Activated T-helper 1 cell treated with anti-CD3 and anti-CD28 coated beads, Interleukin-12 subunit alpha, Interleukin-12 subunit beta, Interleukin-2, Interleukin-4 antibody, amounts not matched to agents 30 ng/mL and 10 ng/mL and 1 ng/mL, durations not matched to agents 14 hours and 24 hours and 36 hours (primary cell): ENCODE measurements at regions of chr14 and their contacts with region 1.

Region 1: GRCh38 chr14:71320107-71320733 is 413.0 kb downstream of the PCNX1 start:
- DNase-seq: peak; percentile 98
- H3K4me3 Mint-ChIP-seq: peak within 1 kb of the TSS; percentile 94
- H3K27ac Mint-ChIP-seq: peak within 1 kb of the TSS; percentile 97
- H3K4me1 Mint-ChIP-seq: peaks cover 54% of the 10 kb centered on the region
- H3K27me3 Mint-ChIP-seq: peaks cover 2% of the 10 kb centered on the region

Region 2: DNA sequence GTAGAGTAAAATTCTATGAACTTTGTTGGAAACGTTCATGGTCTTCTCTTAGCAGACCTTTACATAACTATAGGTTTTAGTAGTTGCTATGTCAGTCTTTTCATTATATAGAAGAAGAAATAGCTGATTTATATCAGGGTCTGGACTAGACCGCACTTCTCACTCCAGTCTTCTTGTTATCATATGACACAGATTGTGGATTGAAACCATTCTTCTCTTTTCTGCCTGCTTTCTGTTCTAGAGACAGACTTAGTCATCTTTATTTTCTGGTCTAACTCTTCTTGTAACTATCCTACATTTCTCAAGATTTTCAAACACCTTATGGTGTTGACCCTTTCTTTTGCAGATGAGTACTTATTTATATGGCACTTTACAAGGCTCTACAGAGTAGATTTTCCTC is 357.3 kb before region 1 on chr14:
- intact Hi-C with region 1: no loop called
- DNase-seq: no peak
- H3K4me3 Mint-ChIP-seq: no peak overlapping the region
- H3K27ac Mint-ChIP-seq: no peak overlapping the region
- H3K4me1 Mint-ChIP-seq: peaks cover 15% of the 10 kb centered on the region
- H3K27me3 Mint-ChIP-seq: no peaks in the 10 kb centered on the region

Region 3: DNA sequence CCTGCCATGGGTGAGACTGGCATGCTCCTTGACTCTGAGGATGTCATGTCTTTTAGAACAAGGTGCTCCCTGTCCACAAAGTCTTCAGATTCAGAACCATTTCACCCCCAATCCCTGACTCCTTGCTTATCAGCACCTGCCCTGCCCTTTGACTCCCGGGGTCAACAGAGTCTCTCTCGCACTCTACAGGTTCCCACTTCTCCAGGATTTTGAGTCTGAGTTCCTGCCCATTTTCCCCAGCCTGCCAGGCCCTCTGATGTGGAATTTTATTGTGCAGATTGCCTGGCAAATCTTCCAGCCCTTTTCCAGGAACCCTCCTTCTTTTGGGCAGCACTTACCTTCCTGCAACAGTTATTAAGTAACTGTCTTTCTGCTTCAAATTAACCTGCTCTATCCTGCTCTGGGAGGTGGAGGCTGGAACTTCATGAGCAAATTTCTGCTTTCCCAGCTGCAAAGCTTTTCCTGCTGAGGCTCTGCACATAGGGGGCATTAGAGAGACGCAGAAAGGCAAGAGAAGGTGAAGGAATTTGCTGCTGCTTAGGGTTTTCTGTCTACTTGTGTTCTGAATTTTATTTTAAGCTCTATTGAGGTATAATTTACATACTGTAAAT is 153.9 kb before region 1 on chr14:
- intact Hi-C with region 1: loop called (anchors 1 kb)
- DNase-seq: no peak
- H3K4me3 Mint-ChIP-seq: no peak overlapping the region
- H3K27ac Mint-ChIP-seq: no peak overlapping the region
- H3K4me1 Mint-ChIP-seq: peaks cover 20% of the 10 kb centered on the region
- H3K27me3 Mint-ChIP-seq: peaks cover 10% of the 10 kb centered on the region

Region 4: DNA sequence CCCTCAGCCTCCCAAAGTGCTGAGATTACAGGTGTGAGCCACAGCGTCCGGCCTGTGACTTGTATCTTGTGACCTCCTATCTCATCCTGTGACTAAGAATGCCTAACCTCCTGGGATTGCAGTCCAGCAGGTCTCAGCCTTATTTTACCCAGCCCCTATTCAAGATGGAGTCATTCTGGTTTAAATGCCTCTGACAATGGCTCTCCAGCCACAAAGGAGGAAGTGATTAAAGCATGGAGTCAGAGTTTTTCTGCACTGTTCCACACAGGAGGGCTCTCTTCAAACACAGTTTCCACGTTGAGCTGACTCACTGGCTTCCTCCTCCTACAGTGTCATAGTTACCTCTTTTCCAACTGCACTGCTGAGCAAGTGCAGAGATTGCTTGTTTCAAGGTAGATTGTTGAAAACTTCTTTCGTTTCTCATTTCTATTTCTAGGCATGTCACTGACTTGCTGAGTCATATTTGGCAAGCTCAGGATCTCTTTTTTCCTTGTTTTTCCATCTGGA is 29.2 kb before region 1 on chr14:
- intact Hi-C with region 1: loop called (anchors 1 kb)
- DNase-seq: no peak
- H3K4me3 Mint-ChIP-seq: peak overlapping the region; percentile 6
- H3K27ac Mint-ChIP-seq: peak overlapping the region; percentile 81
- H3K4me1 Mint-ChIP-seq: peaks cover 31% of the 10 kb centered on the region
- H3K27me3 Mint-ChIP-seq: peaks cover 7% of the 10 kb centered on the region

Region 5: GRCh38 chr14:71395151-71395604 is 75.0 kb after region 1 on chr14:
- intact Hi-C with region 1: no loop called
- DNase-seq: no peak
- H3K4me3 Mint-ChIP-seq: no peak overlapping the region
- H3K27ac Mint-ChIP-seq: peak overlapping the region; percentile 47
- H3K4me1 Mint-ChIP-seq: peaks cover 52% of the 10 kb centered on the region
- H3K27me3 Mint-ChIP-seq: no peaks in the 10 kb centered on the region

Region 6: DNA sequence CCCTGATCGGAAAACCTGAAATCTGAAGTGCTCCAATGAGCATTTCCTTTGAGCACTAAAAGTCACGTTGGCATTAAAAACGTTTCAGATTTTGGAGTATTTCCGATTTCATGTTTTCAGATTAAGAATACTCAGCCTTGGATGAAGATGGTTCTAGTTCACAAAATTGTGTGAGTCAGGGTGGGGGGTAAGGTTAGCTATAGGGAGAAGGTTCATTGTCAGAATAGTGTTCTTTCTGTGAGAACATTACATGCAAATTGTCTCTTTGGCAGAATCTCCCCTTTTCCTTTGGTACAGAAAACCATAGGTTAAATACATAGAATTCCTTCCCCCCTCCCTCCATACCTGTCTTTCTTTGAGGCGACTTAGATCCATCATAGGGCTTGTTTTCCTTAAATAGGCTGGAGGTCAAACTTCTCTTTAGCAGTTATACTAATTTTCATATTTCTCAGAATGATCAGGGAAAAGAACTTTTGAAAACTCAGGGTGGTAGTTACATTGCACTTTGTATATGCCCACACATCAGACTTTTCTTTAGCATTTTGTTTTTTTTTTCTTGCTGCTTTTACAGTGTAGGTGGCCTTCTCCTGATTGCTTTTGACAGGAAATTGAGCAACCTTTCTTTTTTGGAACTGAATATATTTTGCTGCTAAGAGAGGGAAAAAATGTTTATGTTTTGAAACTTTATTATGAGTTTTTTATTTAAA is 90.5 kb after region 1 on chr14:
- intact Hi-C with region 1: loop called (anchors 2 kb)
- DNase-seq: no peak
- H3K4me3 Mint-ChIP-seq: no peak overlapping the region
- H3K27ac Mint-ChIP-seq: peak overlapping the region; percentile 84
- H3K4me1 Mint-ChIP-seq: peaks cover 62% of the 10 kb centered on the region
- H3K27me3 Mint-ChIP-seq: no peaks in the 10 kb centered on the region

Region 7: DNA sequence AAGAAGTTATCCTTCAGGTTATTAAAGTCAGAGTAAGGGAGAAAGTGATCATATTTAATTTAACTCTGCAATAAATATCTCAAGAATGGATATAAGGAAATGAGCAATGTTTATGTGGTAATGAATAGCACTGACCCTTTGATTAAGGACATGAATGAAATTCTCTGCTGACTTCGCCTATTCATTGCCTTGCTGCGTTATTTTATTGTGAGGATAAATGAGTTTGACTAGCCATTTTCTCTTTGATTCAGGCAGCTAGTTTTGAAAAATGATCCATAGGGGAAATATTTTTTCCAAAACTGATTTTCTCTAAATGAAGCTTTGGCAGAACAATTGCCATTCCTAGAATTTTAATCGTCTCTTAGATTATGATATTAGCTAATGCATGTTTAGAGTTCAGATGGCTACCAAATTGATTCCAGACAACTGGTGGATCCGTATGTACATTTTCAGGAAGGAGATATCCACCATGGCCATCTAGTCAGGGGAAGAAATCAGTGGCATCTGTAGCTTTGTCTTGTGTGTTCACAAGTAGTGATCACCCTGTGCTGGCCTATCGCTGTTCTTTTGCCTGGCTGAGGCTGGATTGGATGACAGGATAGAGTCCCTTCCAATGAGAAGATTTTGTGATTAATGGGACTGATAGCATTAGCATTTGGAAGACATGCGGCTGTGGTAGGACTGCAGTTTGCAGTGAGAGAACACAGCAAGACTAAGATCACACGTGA is 309.7 kb after region 1 on chr14:
- intact Hi-C with region 1: no loop called
- DNase-seq: no peak
- H3K4me3 Mint-ChIP-seq: no peak overlapping the region
- H3K27ac Mint-ChIP-seq: no peak overlapping the region
- H3K4me1 Mint-ChIP-seq: no peaks in the 10 kb centered on the region
- H3K27me3 Mint-ChIP-seq: no peaks in the 10 kb centered on the region

Region 8: DNA sequence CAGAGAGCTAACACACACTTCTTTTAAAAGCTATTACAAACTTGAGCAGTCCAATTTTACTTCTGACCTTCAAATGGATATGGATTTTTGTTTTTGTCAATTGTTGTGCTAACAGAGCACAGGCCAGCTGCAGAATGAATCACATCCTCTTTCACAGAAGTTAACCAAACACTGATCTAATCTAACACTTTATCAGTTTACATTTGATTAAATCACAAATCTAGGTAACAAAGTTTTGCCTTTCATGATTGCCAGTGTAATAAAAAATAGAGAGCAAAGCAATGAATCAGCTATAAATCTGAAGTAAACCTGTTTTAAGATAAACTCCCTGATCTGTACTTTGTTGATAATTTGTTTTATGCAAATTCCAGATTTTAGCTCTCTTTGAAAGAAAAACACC is 338.9 kb after region 1 on chr14:
- intact Hi-C with region 1: loop called (anchors 2 kb)
- DNase-seq: no peak
- H3K4me3 Mint-ChIP-seq: no peak overlapping the region
- H3K27ac Mint-ChIP-seq: peak overlapping the region; percentile 22
- H3K4me1 Mint-ChIP-seq: peaks cover 33% of the 10 kb centered on the region
- H3K27me3 Mint-ChIP-seq: no peaks in the 10 kb centered on the region

Region 9: DNA sequence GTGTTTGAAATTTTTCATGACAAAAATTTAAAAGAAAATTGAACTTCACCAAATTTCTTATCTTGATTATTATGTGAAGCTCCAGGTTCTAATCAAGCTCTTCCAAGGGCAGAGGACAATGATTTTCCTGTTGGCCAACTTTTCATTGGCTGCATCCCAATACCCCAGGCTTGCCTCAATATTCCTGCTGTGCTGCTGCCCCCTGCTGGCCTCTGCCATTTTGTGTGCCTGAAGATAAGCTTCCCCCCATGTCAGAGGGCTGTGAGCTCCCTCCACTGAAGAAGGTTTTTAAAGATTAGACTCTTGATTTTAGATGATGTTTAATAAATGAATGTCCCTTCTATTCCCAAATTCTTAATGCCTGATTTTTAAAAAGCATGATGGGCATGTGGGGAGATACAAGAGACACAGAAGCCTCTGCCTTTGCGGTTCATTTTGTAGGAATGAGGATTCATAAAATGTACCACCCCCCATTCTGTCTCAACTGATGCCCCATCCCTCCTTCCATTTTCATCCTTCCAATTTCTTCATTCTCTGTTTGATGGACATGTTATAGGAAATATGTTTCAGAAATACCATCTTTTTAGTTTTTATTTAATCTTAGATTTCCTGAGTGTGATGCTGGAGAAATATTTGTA is 535.3 kb after region 1 on chr14:
- intact Hi-C with region 1: no loop called
- DNase-seq: peak; percentile 24
- H3K4me3 Mint-ChIP-seq: no peak overlapping the region
- H3K27ac Mint-ChIP-seq: no peak overlapping the region
- H3K4me1 Mint-ChIP-seq: peaks cover 14% of the 10 kb centered on the region
- H3K27me3 Mint-ChIP-seq: peaks cover 27% of the 10 kb centered on the region

Region 10: GRCh38 chr14:72476657-72477499 is 1156.7 kb after region 1 on chr14:
- intact Hi-C with region 1: loop called (anchors 10 kb)
- DNase-seq: peak; percentile 81
- H3K4me3 Mint-ChIP-seq: peak overlapping the region; percentile 53
- H3K27ac Mint-ChIP-seq: peak overlapping the region; percentile 87
- H3K4me1 Mint-ChIP-seq: peaks cover 80% of the 10 kb centered on the region
- H3K27me3 Mint-ChIP-seq: no peaks in the 10 kb centered on the region